ENCODE measurements at regions of chr6 and their contacts with region 1.

Region 1: GRCh38 chr6:22142856-22143255 is 154.0 kb downstream of the PRL start:
- DNase-seq: peak; percentile 33 to 84 (median 67)
- H3K4me3 ChIP-seq: peak overlapping the region in 2 of 7 experiments; percentile 16 to 17
- H3K27ac ChIP-seq: peak overlapping the region in 1 of 2 experiments; percentile 50
- H3K4me1 ChIP-seq: peaks cover 16 to 49% (median 40%) of the 10 kb centered on the region in 4 experiments
- H3K27me3 ChIP-seq: no peaks in the 10 kb centered on the region

Region 2: GRCh38 chr6:22003287-22003686 is 139.6 kb before region 1 on chr6:
- CTCF ChIA-PET with region 1: no interaction called
- POLR2A ChIA-PET with region 1: no interaction called
- DNase-seq: no peak
- H3K4me3 ChIP-seq: no peak overlapping the region
- H3K27ac ChIP-seq: no peak overlapping the region
- H3K4me1 ChIP-seq: no peaks in the 10 kb centered on the region
- H3K27me3 ChIP-seq: no peaks in the 10 kb centered on the region

Region 3: GRCh38 chr6:22043284-22043962 is 99.4 kb before region 1 on chr6:
- CTCF ChIA-PET with region 1: no interaction called
- POLR2A ChIA-PET with region 1: interaction called, 13 read pairs
- DNase-seq: no peak
- H3K4me3 ChIP-seq: no peak overlapping the region
- H3K27ac ChIP-seq: no peak overlapping the region
- H3K4me1 ChIP-seq: peaks cover 0 to 5% (median 0%) of the 10 kb centered on the region in 4 experiments
- H3K27me3 ChIP-seq: no peaks in the 10 kb centered on the region